ENCODE measurements at regions of chr2 and their contacts with region 1.

Region 1: GRCh38 chr2:131413148-131413747 is 49.3 kb upstream of the RAB6D start:
- H3K4me3 ChIP-seq: no peak overlapping the region
- H3K27ac ChIP-seq: no peak overlapping the region
- H3K4me1 ChIP-seq: no peaks in the 10 kb centered on the region
- CTCF ChIP-seq: peak; percentile 65

Region 2: GRCh38 chr2:131055169-131056065 is 357.8 kb before region 1 on chr2:
- CTCF ChIA-PET with region 1: no interaction called
- POLR2A ChIA-PET with region 1: no interaction called
- H3K4me3 ChIP-seq: no peak overlapping the region
- H3K27ac ChIP-seq: no peak overlapping the region
- H3K4me1 ChIP-seq: no peaks in the 10 kb centered on the region
- CTCF ChIP-seq: no peak

Region 3: GRCh38 chr2:131425231-131425941 is 12.1 kb after region 1 on chr2:
- CTCF ChIA-PET with region 1: interaction called, 10 read pairs
- POLR2A ChIA-PET with region 1: no interaction called
- H3K4me3 ChIP-seq: peak overlapping the region; percentile 24
- H3K27ac ChIP-seq: no peak overlapping the region
- H3K4me1 ChIP-seq: no peaks in the 10 kb centered on the region
- CTCF ChIP-seq: no peak

Region 4: DNA sequence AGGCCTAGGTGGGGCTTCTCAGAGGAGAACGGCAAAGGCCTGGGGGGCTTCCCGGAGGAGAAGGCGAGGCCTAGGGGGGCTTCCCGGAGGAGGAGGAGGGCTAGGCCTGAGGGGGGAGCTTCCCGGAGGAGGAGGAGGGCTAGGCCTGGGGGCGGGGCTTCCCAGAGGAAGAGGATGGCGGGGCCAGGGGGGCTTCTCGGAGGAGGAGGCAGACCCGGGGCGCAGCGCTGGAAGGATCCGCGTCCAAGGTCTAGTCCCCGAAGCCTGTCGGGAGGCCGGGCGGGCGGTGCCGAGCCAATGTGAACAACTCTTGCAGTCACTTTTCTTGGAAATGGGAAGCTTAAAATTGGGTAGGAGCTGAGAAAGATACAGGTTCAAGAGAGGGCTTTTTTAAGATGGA is 32.6 kb after region 1 on chr2:
- CTCF ChIA-PET with region 1: no interaction called
- POLR2A ChIA-PET with region 1: no interaction called
- H3K4me3 ChIP-seq: no peak overlapping the region
- H3K27ac ChIP-seq: no peak overlapping the region
- H3K4me1 ChIP-seq: no peaks in the 10 kb centered on the region
- CTCF ChIP-seq: no peak

Region 5: GRCh38 chr2:131492418-131493198 is 79.4 kb after region 1 on chr2:
- CTCF ChIA-PET with region 1: interaction called, 16 read pairs
- POLR2A ChIA-PET with region 1: no interaction called
- H3K4me3 ChIP-seq: peak overlapping the region; percentile 51
- H3K27ac ChIP-seq: peak overlapping the region; percentile 88
- H3K4me1 ChIP-seq: 0 out of 2 replicates have a peak, but pooled peaks cover 2% of the 10 kb centered on the region
- CTCF ChIP-seq: peak; percentile 99